Activated T-helper 2 cell treated with anti-CD3 and anti-CD28 coated beads, Interferon-gamma antibody, Interleukin-2, Interleukin-4, amounts not matched to agents 10 μg/mL and 5 μg/mL and 100 μg/mL, durations not matched to agents 14 hours and 24 hours and 36 hours (primary cell): ENCODE measurements at regions of chrX and their contacts with region 1.

Region 1: GRCh38 chrX:13750204-13750603 is 15.7 kb downstream of the OFD1 start:
- DNase-seq: no peak
- H3K4me3 Mint-ChIP-seq: no peak overlapping the region
- H3K27ac Mint-ChIP-seq: no peak overlapping the region
- H3K4me1 Mint-ChIP-seq: peaks cover 16% of the 10 kb centered on the region
- H3K27me3 Mint-ChIP-seq: no peaks in the 10 kb centered on the region

Region 2: GRCh38 chrX:13506574-13506973 is 243.6 kb before region 1 on chrX:
- intact Hi-C with region 1: loop called (anchors 5 kb)
- DNase-seq: peak; percentile 10
- H3K4me3 Mint-ChIP-seq: no peak overlapping the region
- H3K27ac Mint-ChIP-seq: no peak overlapping the region
- H3K4me1 Mint-ChIP-seq: peaks cover 6% of the 10 kb centered on the region
- H3K27me3 Mint-ChIP-seq: no peaks in the 10 kb centered on the region

Region 3: GRCh38 chrX:13658602-13659001 is 91.6 kb before region 1 on chrX:
- intact Hi-C with region 1: loop called (anchors 1 kb)
- DNase-seq: no peak
- H3K4me3 Mint-ChIP-seq: no peak overlapping the region
- H3K27ac Mint-ChIP-seq: no peak overlapping the region
- H3K4me1 Mint-ChIP-seq: peaks cover 19% of the 10 kb centered on the region
- H3K27me3 Mint-ChIP-seq: no peaks in the 10 kb centered on the region

Region 4: GRCh38 chrX:13898083-13898482 is 147.9 kb after region 1 on chrX:
- intact Hi-C with region 1: no loop called
- DNase-seq: no peak
- H3K4me3 Mint-ChIP-seq: no peak overlapping the region
- H3K27ac Mint-ChIP-seq: no peak overlapping the region
- H3K4me1 Mint-ChIP-seq: no peaks in the 10 kb centered on the region
- H3K27me3 Mint-ChIP-seq: no peaks in the 10 kb centered on the region